ENCODE measurements at regions of chr11 and their contacts with region 1.

Region 1: GRCh38 chr11:46876471-46876870 is 30.4 kb upstream of the CKAP5 start:
- DNase-seq: no peak
- ATAC-seq: no peak
- H3K4me3 ChIP-seq: no peak overlapping the region
- H3K27ac ChIP-seq: no peak overlapping the region
- H3K4me1 ChIP-seq: no peaks in the 10 kb centered on the region
- H3K27me3 ChIP-seq: no peaks in the 10 kb centered on the region
- CTCF ChIP-seq: no peak
- POLR2A ChIP-seq: no peak

Region 2: DNA sequence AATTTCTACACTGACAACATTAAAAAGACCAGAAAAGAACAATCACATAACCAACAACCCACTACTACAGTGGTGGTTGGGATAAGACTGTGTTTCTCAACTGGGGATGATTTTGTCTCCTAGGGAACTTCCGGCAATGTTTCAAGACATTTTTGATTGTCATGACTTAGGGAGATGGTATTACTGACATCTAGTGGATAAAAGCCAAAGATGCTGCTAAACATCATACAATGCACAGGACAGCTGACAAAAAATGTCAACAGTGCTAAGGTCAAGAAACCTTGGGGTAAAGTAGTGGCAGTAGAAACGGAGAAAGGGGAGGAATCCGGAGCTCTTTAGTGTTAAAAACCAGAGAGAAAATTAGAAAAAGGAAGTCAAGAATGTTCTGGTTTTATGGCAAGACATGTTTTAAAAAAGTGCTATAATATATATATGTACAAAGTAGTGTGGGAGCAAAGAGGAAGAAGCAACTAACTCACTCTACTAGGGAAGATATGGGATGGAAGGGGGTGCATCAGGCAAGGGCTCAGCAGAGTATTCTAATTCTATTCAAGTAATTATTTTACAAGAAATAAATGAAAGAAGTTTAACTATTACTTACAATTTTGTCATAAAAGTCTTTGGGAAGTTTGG is 67.6 kb before region 1 on chr11:
- in situ Hi-C with region 1: no loop called
- intact Hi-C with region 1: no loop called
- DNase-seq: no peak
- ATAC-seq: peak in 1 of 2 donors; percentile 49
- H3K4me3 ChIP-seq: no peak overlapping the region
- H3K27ac ChIP-seq: no peak overlapping the region
- H3K4me1 ChIP-seq: no peaks in the 10 kb centered on the region
- H3K27me3 ChIP-seq: no peaks in the 10 kb centered on the region
- CTCF ChIP-seq: no peak
- POLR2A ChIP-seq: no peak

Region 3: DNA sequence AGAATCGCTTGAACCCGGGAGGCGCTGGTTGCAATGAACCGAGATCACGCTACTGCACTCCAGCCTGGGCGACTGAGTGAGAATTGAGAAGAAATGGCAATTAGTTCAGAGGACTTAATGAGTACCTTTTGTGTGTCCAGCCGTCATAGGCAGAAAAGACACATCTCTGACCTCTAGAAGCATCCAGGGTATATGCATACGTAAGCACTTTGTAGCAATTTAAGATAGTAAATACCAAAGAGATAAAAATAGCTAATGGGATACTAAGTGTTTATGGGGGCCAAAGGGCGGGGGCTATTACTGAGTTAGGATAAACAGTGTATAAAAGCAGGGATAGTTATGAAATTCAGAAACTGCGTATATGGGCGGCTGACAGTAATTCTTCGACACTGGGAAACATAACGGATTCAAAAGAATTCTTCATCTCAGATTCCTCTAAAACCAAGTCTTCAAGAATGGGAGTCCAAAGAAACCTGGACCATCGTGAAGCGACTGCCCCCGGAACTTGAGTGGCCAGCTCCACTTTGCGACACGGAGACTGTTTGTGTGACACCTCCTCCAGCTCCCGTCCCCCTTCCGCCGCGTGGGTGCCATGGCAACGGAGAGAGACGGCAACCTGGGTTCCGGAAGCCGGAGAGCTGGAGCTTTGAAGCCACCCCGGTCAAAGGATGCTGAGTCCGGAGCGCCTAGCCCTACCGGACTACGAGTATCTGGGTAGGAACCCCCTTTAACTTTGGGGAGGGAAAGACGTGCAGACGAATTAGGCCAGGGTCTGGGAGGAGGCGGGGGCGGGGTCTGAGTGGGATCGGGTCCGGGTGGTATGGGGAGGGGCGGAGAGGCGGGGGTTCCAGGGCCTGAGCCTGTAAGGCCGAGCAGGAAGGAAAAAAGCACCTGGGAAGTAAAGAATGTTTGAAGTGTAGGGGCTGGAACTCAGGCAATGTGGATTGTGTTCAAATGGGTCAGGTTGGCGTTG is 60.0 kb after region 1 on chr11 and contains the start of gene CSTPP1:
- in situ Hi-C with region 1: no loop called
- intact Hi-C with region 1: loop called (anchors 2 kb)
- DNase-seq: peak; percentile 80 to 88
- ATAC-seq: peak; percentile 99
- H3K4me3 ChIP-seq: peak within 1 kb of the TSS; percentile 73 to 91 (median 82)
- H3K27ac ChIP-seq: peak within 1 kb of the TSS; percentile 23 to 54 (median 50)
- H3K4me1 ChIP-seq: peaks cover 5 to 10% of the 10 kb centered on the region in 2 donors
- H3K27me3 ChIP-seq: no peaks in the 10 kb centered on the region
- CTCF ChIP-seq: no peak
- POLR2A ChIP-seq: no peak
- total RNA-seq, gene CSTPP1: 4.3 to 8.1 (median 6.4) TPM

Measured in gastrocnemius medialis (tissue), 4 donors.